ENCODE measurements at regions of chr16 and their contacts with region 1.

Region 1: DNA sequence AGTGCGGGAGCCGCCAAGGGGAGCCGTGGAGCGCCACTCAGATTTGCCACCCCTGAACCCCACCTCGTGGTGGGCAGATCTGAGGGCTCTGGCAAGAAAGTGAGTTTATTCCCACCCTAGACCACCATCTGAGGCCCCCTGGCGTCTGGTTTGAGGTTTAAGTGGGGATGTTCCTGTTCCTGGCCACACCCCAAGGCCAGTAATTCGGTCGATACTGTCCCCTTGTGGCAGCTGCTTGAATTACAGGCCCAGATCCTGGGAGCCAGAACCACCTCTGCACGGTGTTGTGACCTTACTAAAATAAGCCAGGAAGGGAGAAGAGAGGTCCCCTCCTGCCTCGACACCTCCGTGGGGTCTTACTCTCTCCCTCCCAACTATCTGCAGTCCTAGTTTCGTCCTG is 3.3 kb upstream of the LAT start:
- DNase-seq: no peak
- H3K4me3 ChIP-seq: no peak overlapping the region
- H3K4me3 Mint-ChIP-seq: no peak overlapping the region
- H3K27ac ChIP-seq: no peak overlapping the region
- H3K27ac Mint-ChIP-seq: no peak overlapping the region
- H3K4me1 ChIP-seq: peaks cover 29% of the 10 kb centered on the region
- H3K4me1 Mint-ChIP-seq: peaks cover 27 to 55% (median 37%) of the 10 kb centered on the region in 4 donors
- H3K27me3 ChIP-seq: no peaks in the 10 kb centered on the region
- H3K27me3 Mint-ChIP-seq: no peaks in the 10 kb centered on the region

Region 2: DNA sequence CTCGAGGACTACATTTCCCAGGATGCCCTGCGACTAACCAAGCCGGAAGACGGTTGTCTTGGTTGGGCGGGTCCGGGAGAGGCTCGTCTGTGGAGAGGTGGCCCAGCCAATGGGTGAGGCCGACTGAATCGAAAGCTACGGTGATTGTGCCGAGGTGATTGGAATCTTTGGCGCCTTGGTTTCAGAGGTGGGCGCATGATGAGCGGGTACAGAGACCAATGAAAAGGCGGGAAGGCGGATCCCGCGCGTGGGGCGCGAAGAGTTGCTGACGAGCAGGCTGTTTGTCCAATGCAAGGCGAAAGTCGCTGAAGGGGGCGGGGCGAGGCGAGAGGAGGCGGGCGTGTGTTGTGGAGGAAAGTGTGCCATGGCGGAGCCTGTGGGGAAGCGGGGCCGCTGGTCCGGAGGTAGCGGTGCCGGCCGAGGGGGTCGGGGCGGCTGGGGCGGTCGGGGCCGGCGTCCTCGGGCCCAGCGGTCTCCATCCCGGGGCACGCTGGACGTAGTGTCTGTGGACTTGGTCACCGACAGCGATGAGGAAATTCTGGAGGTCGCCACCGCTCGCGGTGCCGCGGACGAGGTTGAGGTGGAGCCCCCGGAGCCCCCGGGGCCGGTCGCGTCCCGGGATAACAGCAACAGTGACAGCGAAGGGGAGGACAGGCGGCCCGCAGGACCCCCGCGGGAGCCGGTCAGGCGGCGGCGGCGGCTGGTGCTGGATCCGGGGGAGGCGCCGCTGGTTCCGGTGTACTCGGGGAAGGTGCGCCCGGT is 30.7 kb before region 1 on chr16 and contains the start of gene NFATC2IP:
- CTCF ChIA-PET with region 1: interaction called, 8 read pairs
- POLR2A ChIA-PET with region 1: interaction called, 4 read pairs
- intact Hi-C with region 1: loop called (anchors 2 kb)
- DNase-seq: peak; percentile 99 to 100 (median 100)
- H3K4me3 ChIP-seq: peak within 1 kb of the TSS; percentile 12 to 66
- H3K4me3 Mint-ChIP-seq: peak within 1 kb of the TSS; percentile 93 to 99 (median 96)
- H3K27ac ChIP-seq: peak within 1 kb of the TSS; percentile 70
- H3K27ac Mint-ChIP-seq: peak within 1 kb of the TSS; percentile 68 to 96 (median 93)
- H3K4me1 ChIP-seq: peaks cover 28% of the 10 kb centered on the region
- H3K4me1 Mint-ChIP-seq: peaks cover 14 to 40% (median 29%) of the 10 kb centered on the region in 4 donors
- H3K27me3 ChIP-seq: no peaks in the 10 kb centered on the region
- H3K27me3 Mint-ChIP-seq: no peaks in the 10 kb centered on the region
- total RNA-seq, gene NFATC2IP: 105 to 115 TPM

Region 3: GRCh38 chr16:28999577-28999976 is 18.1 kb after region 1 on chr16:
- CTCF ChIA-PET with region 1: interaction called, 14 read pairs
- POLR2A ChIA-PET with region 1: interaction called, 79 read pairs
- intact Hi-C with region 1: no loop called
- DNase-seq: no peak
- H3K4me3 ChIP-seq: no peak overlapping the region
- H3K4me3 Mint-ChIP-seq: no peak overlapping the region
- H3K27ac ChIP-seq: no peak overlapping the region
- H3K27ac Mint-ChIP-seq: no peak overlapping the region
- H3K4me1 ChIP-seq: no peaks in the 10 kb centered on the region
- H3K4me1 Mint-ChIP-seq: peaks cover 2 to 12% (median 6%) of the 10 kb centered on the region in 4 donors
- H3K27me3 ChIP-seq: no peaks in the 10 kb centered on the region
- H3K27me3 Mint-ChIP-seq: no peaks in the 10 kb centered on the region

Region 4: GRCh38 chr16:29007730-29008593 is 26.4 kb after region 1 on chr16:
- CTCF ChIA-PET with region 1: interaction called, 18 read pairs
- POLR2A ChIA-PET with region 1: interaction called, 92 read pairs
- intact Hi-C with region 1: no loop called
- DNase-seq: peak; percentile 64 to 84 (median 70)
- H3K4me3 ChIP-seq: peak overlapping the region in 1 of 2 donors; percentile 29
- H3K4me3 Mint-ChIP-seq: peak overlapping the region; percentile 10 to 89 (median 77)
- H3K27ac ChIP-seq: peak overlapping the region; percentile 12
- H3K27ac Mint-ChIP-seq: peak overlapping the region; percentile 83 to 99 (median 96)
- H3K4me1 ChIP-seq: peaks cover 58% of the 10 kb centered on the region
- H3K4me1 Mint-ChIP-seq: peaks cover 30 to 63% (median 46%) of the 10 kb centered on the region in 4 donors
- H3K27me3 ChIP-seq: no peaks in the 10 kb centered on the region
- H3K27me3 Mint-ChIP-seq: no peaks in the 10 kb centered on the region

Region 5: DNA sequence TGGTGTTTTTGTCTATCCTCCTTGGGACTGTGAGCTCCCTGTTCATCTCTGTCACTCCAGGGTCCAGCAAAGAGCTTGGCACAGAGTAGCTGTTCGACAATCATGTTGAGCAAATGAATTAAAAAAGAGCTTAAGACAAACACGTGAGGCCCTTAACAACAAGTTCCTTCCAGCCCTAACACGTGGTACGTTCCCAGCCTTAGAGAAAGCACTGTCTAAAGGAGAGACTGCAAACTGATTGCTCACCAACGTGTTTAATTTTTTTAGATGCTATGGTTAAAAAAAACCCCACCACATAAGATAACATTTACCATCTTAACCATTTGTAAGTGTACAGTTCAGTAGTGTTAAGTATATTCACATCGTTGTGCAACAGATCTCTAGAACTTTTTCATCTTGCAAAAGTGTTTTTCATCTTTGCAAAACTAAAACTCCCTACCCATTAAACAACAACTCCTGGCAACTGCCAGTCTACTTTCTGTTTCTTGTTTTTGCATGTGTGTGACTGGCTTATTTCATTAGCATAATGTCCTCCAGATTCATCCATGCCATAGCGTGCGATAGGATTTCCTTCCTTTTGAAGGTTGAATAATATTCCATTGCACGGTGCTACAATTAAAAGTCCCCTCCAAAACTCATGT is 31.5 kb after region 1 on chr16:
- CTCF ChIA-PET with region 1: interaction called, 18 read pairs
- POLR2A ChIA-PET with region 1: interaction called, 92 read pairs
- intact Hi-C with region 1: no loop called
- DNase-seq: peak; percentile 53 to 69 (median 62)
- H3K4me3 ChIP-seq: no peak overlapping the region
- H3K4me3 Mint-ChIP-seq: peak overlapping the region; percentile 13 to 77 (median 52)
- H3K27ac ChIP-seq: no peak overlapping the region
- H3K27ac Mint-ChIP-seq: peak overlapping the region; percentile 85 to 98 (median 95)
- H3K4me1 ChIP-seq: peaks cover 62% of the 10 kb centered on the region
- H3K4me1 Mint-ChIP-seq: peaks cover 31 to 59% (median 45%) of the 10 kb centered on the region in 4 donors
- H3K27me3 ChIP-seq: no peaks in the 10 kb centered on the region
- H3K27me3 Mint-ChIP-seq: no peaks in the 10 kb centered on the region

Region 6: DNA sequence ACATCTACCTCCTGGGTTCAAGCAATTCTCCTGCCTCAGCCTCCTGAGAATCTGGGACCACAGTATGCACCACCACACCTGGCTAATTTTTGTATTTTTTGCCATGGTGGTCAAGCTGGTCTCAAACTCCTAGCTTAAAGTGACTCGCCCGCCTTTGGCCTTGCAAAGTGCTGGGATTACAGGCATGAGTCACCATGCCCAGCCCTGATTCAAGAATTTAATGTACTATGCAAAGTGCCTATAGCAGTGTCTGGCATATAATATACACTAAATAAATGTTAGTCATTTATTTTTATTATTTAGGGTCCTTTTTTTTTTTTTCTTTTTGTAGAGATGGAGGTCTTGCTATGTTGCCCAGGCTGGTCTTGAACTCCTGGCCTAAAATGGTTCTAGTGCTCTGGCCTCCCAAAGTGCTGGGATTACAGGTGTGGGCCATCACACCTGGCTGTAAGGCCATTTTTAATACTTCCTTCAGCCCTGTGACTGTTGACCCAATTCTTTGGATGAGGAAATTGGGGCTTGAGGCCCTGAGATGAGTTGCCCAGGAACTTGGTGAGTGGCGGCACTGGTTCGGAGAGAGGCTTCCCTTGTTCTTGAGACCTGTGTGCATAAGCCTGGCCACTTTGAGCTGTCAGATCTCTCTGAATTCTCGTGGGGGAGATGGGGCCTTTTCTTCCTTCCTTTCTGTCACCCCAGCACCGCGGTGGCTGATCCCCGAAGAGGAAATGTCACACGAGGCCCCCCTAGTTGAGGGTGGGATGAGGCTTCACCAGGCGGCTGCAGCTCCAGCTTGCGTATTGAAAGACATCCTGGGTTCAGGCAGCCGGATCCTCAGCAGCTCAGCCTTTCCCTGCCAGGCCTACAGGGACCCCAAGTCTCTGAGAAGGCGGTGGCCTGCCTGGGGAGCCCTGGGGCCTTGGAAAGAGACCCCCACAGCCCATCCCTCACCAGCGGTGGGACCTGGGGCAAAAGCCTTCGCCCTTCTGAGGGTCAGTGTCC is 42.1 kb after region 1 on chr16:
- CTCF ChIA-PET with region 1: interaction called, 11 read pairs
- POLR2A ChIA-PET with region 1: interaction called, 61 read pairs
- intact Hi-C with region 1: no loop called
- DNase-seq: no peak
- H3K4me3 ChIP-seq: peak overlapping the region in 1 of 2 donors; percentile 17
- H3K4me3 Mint-ChIP-seq: peak overlapping the region in 4 of 8 donors; percentile 15 to 57 (median 48)
- H3K27ac ChIP-seq: no peak overlapping the region
- H3K27ac Mint-ChIP-seq: peak overlapping the region; percentile 30 to 88 (median 55)
- H3K4me1 ChIP-seq: peaks cover 47% of the 10 kb centered on the region
- H3K4me1 Mint-ChIP-seq: peaks cover 21 to 50% (median 36%) of the 10 kb centered on the region in 4 donors
- H3K27me3 ChIP-seq: no peaks in the 10 kb centered on the region
- H3K27me3 Mint-ChIP-seq: no peaks in the 10 kb centered on the region

Region 7: DNA sequence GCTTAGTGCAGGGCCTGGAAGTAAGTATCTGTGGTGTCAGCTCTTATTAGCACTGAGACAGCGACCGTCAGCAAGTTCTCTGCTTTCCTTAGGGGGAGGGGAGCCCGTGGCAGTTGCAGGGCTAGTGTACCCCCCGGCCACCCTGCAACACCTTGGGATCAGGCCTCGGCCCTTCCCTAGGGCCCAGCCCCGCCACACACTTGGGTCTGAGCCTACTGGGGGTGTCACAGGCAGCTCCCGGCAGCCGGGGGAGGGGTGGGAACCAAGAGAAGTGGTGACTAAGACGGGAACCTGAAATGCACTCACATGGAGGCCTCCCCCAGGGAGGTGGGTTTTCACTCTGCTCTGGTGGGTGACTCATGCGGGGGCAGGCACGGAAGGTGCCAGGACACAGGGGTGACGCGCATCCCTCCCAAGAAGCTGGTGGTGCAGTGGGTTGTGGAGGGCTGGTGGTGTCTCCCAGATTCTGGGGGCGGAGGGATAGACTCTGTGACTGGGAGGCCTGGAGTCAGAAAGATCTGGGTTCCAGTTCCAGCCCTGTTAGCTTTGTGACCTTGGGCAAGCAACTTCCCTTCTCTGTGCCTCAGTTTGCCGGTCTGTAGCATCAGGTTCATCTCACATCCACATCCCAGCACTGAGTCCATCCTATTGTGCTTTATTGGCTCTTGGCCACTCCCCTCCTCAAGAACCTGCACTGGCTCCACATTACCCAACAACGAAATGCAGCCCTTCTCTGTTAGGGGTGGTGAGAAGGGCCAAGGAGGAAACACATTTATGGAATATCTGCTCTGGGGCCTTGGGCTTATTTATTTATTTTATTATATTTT is 47.9 kb after region 1 on chr16:
- CTCF ChIA-PET with region 1: interaction called, 10 read pairs
- POLR2A ChIA-PET with region 1: interaction called, 61 read pairs
- intact Hi-C with region 1: no loop called
- DNase-seq: peak in 1 of 5 donors; percentile 73
- H3K4me3 ChIP-seq: no peak overlapping the region
- H3K4me3 Mint-ChIP-seq: peak overlapping the region in 6 of 8 donors; percentile 7 to 52 (median 36)
- H3K27ac ChIP-seq: no peak overlapping the region
- H3K27ac Mint-ChIP-seq: peak overlapping the region in 6 of 7 donors; percentile 55 to 83 (median 64)
- H3K4me1 ChIP-seq: peaks cover 31% of the 10 kb centered on the region
- H3K4me1 Mint-ChIP-seq: peaks cover 17 to 37% (median 26%) of the 10 kb centered on the region in 4 donors
- H3K27me3 ChIP-seq: no peaks in the 10 kb centered on the region
- H3K27me3 Mint-ChIP-seq: no peaks in the 10 kb centered on the region